ENCODE measurements at regions of chr7 and their contacts with region 1.

Region 1: GRCh38 chr7:24979863-24980533 is at the start of gene OSBPL3:
- DNase-seq: peak; percentile 94 to 97 (median 95)
- H3K4me3 ChIP-seq: peak within 1 kb of the TSS; percentile 59 to 72
- H3K4me3 Mint-ChIP-seq: peak within 1 kb of the TSS; percentile 91 to 98 (median 97)
- H3K27ac ChIP-seq: peak within 1 kb of the TSS; percentile 66
- H3K27ac Mint-ChIP-seq: peak within 1 kb of the TSS; percentile 94 to 99 (median 96)
- H3K4me1 ChIP-seq: peaks cover 57% of the 10 kb centered on the region
- H3K4me1 Mint-ChIP-seq: peaks cover 44 to 67% (median 54%) of the 10 kb centered on the region in 4 donors
- H3K27me3 ChIP-seq: no peaks in the 10 kb centered on the region
- H3K27me3 Mint-ChIP-seq: no peaks in the 10 kb centered on the region
- total RNA-seq, gene OSBPL3: 61.2 to 72.7 TPM

Region 2: DNA sequence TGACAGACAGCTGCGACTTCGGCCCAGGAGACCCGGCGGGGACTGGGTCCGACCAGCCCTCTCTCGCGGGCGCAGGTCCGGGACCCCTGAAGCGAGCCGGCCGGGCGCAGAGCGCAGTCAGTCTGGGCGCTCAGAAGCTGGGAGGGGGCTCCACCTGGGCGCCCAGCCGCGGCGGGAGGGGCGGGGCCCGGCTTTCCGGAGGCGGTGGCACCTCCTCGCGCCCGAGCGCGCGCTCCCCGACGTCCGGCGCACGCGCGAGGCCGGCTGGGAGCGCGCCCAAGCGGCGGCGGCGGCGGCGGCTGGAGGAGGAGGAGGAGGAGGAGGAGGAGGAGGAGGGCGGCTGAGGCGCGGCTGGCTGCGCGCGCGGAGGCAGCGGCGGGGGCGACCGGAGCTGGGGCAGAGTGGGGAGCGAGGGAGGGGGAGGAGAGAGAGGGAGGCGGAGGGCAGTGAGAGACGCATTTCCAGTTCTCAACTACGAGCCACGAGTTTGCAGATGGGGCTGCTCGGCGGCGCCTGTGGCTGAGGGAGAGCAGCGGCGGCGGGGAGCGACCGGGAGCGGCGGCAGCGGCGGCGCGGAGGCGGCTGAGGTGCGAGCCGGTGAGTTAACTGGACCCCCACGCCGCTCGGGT is 406.9 kb before region 1 on chr7 and contains the start of gene PALS2:
- CTCF ChIA-PET with region 1: no interaction called
- POLR2A ChIA-PET with region 1: no interaction called
- intact Hi-C with region 1: loop called (anchors 2 kb)
- DNase-seq: peak; percentile 81 to 87 (median 83)
- H3K4me3 ChIP-seq: peak within 1 kb of the TSS; percentile 62 to 66
- H3K4me3 Mint-ChIP-seq: peak within 1 kb of the TSS; percentile 92 to 99 (median 94)
- H3K27ac ChIP-seq: peak within 1 kb of the TSS; percentile 56
- H3K27ac Mint-ChIP-seq: peak within 1 kb of the TSS; percentile 86 to 95 (median 92)
- H3K4me1 ChIP-seq: peaks cover 32% of the 10 kb centered on the region
- H3K4me1 Mint-ChIP-seq: peaks cover 20 to 38% (median 28%) of the 10 kb centered on the region in 4 donors
- H3K27me3 ChIP-seq: no peaks in the 10 kb centered on the region
- H3K27me3 Mint-ChIP-seq: peaks cover 2 to 4% of the 10 kb centered on the region in 2 donors
- total RNA-seq, gene PALS2: 32.9 to 50.1 TPM

Region 3: GRCh38 chr7:24715661-24716479 is 264.1 kb before region 1 on chr7:
- CTCF ChIA-PET with region 1: no interaction called
- POLR2A ChIA-PET with region 1: no interaction called
- intact Hi-C with region 1: no loop called
- DNase-seq: no peak
- H3K4me3 ChIP-seq: no peak overlapping the region
- H3K4me3 Mint-ChIP-seq: no peak overlapping the region
- H3K27ac ChIP-seq: no peak overlapping the region
- H3K27ac Mint-ChIP-seq: peak overlapping the region in 1 of 7 donors; percentile 58
- H3K4me1 ChIP-seq: no peaks in the 10 kb centered on the region
- H3K4me1 Mint-ChIP-seq: peaks cover 0 to 8% (median 0%) of the 10 kb centered on the region in 4 donors
- H3K27me3 ChIP-seq: no peaks in the 10 kb centered on the region
- H3K27me3 Mint-ChIP-seq: peaks cover 0 to 22% of the 10 kb centered on the region in 2 donors

Region 4: GRCh38 chr7:24825931-24826661 is 153.9 kb before region 1 on chr7:
- CTCF ChIA-PET with region 1: interaction called, 135 read pairs
- POLR2A ChIA-PET with region 1: interaction called, 164 read pairs
- intact Hi-C with region 1: loop called (anchors 1 kb)
- DNase-seq: no peak
- H3K4me3 ChIP-seq: peak overlapping the region in 1 of 2 donors; percentile 21
- H3K4me3 Mint-ChIP-seq: peak overlapping the region in 7 of 8 donors; percentile 56 to 89 (median 76)
- H3K27ac ChIP-seq: peak overlapping the region; percentile 45
- H3K27ac Mint-ChIP-seq: peak overlapping the region; percentile 87 to 96 (median 91)
- H3K4me1 ChIP-seq: peaks cover 62% of the 10 kb centered on the region
- H3K4me1 Mint-ChIP-seq: peaks cover 51 to 72% (median 65%) of the 10 kb centered on the region in 4 donors
- H3K27me3 ChIP-seq: no peaks in the 10 kb centered on the region
- H3K27me3 Mint-ChIP-seq: no peaks in the 10 kb centered on the region

Region 5: DNA sequence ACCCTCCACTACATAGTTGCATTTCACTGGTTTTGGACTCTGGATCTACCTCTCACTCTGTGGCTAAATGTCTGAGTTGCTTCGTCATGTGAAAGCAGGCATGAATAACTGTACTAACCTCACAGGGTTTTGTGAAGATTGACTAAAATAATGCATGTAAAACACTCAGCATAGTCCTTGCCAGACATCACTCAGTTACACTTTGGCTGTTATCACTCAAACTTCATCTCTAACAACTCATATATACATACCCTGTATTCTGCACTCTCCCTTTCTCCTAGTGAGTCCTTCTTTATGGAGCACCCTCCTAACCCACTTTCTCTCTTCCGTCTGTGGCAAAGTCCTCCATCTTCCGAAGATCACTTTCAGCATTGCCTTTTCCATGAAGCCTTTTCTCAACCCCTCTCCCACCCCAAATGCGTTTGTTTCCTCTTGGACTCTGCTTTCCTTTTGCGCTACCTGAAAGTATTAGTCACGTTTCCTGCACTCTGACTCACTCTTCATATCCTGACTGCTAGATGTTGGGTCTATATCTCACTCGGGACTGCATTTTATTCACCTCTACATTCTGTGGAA is 72.6 kb before region 1 on chr7:
- CTCF ChIA-PET with region 1: interaction called, 44 read pairs
- POLR2A ChIA-PET with region 1: interaction called, 68 read pairs
- intact Hi-C with region 1: loop called (anchors 1 kb)
- DNase-seq: peak; percentile 16 to 76 (median 29)
- H3K4me3 ChIP-seq: peak overlapping the region; percentile 14 to 23
- H3K4me3 Mint-ChIP-seq: no peak overlapping the region
- H3K27ac ChIP-seq: peak overlapping the region; percentile 6
- H3K27ac Mint-ChIP-seq: no peak overlapping the region
- H3K4me1 ChIP-seq: peaks cover 88% of the 10 kb centered on the region
- H3K4me1 Mint-ChIP-seq: peaks cover 35 to 42% (median 38%) of the 10 kb centered on the region in 4 donors
- H3K27me3 ChIP-seq: no peaks in the 10 kb centered on the region
- H3K27me3 Mint-ChIP-seq: no peaks in the 10 kb centered on the region

Region 6: DNA sequence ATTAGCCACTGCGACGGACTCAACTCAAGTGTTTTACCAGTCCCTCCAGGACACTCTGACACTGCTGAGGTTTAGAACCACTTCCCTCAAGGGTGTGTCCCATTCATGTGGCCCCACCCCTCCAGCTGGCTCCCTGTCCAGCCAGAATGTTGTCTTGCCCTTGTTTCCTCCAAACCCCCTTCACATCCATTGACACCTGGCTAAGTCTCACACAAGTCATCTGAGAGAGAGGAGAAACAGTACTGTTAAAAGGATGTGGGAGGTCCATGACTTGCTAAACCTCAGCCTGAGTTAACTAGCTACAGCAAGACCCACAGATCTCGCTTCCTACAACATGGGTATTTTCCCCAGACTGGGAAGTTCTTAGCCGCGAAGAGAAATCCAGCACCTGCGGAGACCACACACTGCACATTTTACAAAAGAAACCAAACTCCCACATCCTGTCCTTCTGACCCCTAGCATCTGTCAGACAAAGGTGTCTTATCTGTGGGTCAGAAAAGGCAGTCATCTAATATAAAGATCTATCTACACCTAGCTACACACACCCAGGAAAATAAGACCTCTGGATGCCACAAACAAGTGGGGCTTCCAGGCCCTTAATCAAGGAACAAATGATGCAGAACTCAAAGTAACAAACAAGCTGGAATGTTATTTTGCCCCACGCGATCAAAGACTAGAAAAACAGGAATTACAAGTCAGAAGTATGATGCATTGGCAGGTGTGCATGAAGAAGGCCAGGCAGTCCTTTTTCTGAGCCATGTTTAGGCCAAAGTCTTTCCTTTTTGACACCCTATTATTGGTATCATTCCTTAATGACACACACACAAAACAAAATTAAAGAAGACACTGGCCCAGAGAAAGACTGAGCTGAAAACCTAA is 13.9 kb before region 1 on chr7:
- CTCF ChIA-PET with region 1: interaction called, 18 read pairs
- POLR2A ChIA-PET with region 1: interaction called, 141 read pairs
- intact Hi-C with region 1: loop called (anchors 2 kb)
- DNase-seq: peak; percentile 26 to 62 (median 44)
- H3K4me3 ChIP-seq: no peak overlapping the region
- H3K4me3 Mint-ChIP-seq: peak overlapping the region; percentile 33 to 72 (median 65)
- H3K27ac ChIP-seq: peak overlapping the region; percentile 46
- H3K27ac Mint-ChIP-seq: peak overlapping the region; percentile 74 to 94 (median 81)
- H3K4me1 ChIP-seq: peaks cover 70% of the 10 kb centered on the region
- H3K4me1 Mint-ChIP-seq: peaks cover 50 to 89% (median 75%) of the 10 kb centered on the region in 4 donors
- H3K27me3 ChIP-seq: no peaks in the 10 kb centered on the region
- H3K27me3 Mint-ChIP-seq: no peaks in the 10 kb centered on the region

Region 7: GRCh38 chr7:25069900-25070443 is 90.0 kb after region 1 on chr7:
- CTCF ChIA-PET with region 1: interaction called, 54 read pairs
- POLR2A ChIA-PET with region 1: interaction called, 29 read pairs
- intact Hi-C with region 1: loop called (anchors 1 kb)
- DNase-seq: peak; percentile 43 to 57 (median 54)
- H3K4me3 ChIP-seq: no peak overlapping the region
- H3K4me3 Mint-ChIP-seq: no peak overlapping the region
- H3K27ac ChIP-seq: no peak overlapping the region
- H3K27ac Mint-ChIP-seq: peak overlapping the region in 2 of 7 donors; percentile 44 to 51
- H3K4me1 ChIP-seq: peaks cover 5% of the 10 kb centered on the region
- H3K4me1 Mint-ChIP-seq: peaks cover 0 to 7% (median 4%) of the 10 kb centered on the region in 4 donors
- H3K27me3 ChIP-seq: no peaks in the 10 kb centered on the region
- H3K27me3 Mint-ChIP-seq: no peaks in the 10 kb centered on the region

Region 8: DNA sequence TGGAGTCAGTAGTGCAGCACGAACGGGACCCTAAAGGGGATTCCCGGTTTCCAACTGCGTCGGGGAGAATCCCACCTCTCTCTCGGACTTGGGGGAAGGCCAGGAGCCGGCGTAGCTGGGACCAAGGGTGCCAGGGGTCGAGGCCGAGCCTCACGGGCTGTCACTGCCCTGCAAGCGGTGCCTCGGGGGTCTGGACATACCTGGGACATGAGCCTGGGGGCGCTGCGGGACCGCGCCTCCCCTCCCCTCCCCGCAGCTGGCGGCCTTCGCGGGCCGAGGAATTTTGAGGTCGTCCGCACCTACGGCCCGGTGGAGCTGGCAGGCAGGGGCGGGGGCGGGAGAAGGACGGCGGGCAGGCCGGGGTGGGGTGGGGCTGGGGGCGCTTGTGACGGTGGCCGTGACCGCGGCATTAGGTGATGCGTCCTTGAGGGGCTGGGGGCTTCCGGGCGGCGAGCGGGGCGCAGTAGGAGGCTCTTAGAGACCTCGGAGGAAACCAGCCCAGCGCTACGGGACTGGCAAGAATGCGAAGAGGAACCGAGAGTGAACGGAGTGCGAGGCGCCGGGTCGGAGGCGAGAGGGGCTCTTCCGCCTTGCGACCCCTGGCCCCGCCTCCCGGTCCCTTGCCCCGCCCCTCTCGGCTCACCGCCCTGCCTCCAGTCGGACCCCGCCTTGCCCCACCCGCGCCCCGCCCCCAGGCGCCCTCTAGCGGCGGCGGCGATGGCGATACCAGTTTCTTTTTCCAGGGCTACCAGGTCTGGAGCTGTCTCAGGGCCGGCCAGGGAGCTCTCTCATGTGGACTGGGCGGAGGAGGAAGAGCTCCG is 200.0 kb after region 1 on chr7:
- CTCF ChIA-PET with region 1: no interaction called
- POLR2A ChIA-PET with region 1: no interaction called
- intact Hi-C with region 1: loop called (anchors 1 kb)
- DNase-seq: peak; percentile 90 to 95 (median 91)
- H3K4me3 ChIP-seq: peak overlapping the region; percentile 45 to 71
- H3K4me3 Mint-ChIP-seq: peak overlapping the region; percentile 88 to 95 (median 92)
- H3K27ac ChIP-seq: peak overlapping the region; percentile 68
- H3K27ac Mint-ChIP-seq: peak overlapping the region; percentile 76 to 96 (median 93)
- H3K4me1 ChIP-seq: peaks cover 12% of the 10 kb centered on the region
- H3K4me1 Mint-ChIP-seq: peaks cover 5 to 27% (median 18%) of the 10 kb centered on the region in 4 donors
- H3K27me3 ChIP-seq: no peaks in the 10 kb centered on the region
- H3K27me3 Mint-ChIP-seq: no peaks in the 10 kb centered on the region